ENCODE measurements at regions of chr2 and their contacts with region 1.

Region 1: DNA sequence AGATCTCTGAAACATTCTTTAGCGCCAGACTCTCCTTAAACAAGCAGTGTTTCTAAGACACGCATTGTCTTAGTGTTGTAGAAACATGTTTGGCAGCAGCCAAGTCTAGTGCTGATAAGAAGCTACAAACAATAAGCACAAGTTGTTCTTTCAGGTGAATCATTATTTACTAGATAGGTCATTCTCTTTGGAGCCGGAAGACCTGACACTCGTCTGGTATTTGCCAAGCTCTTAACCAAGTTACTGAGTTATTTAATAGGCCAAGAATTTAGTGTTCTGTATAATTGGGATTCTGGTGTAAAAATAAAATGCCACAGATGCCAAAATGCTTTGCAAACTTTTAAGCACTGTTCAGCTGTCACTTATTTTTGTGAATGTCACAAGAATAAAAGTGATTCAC is 852.1 kb downstream of the CPS1 start:
- DNase-seq: no peak
- H3K4me3 ChIP-seq: no peak overlapping the region
- H3K27ac ChIP-seq: no peak overlapping the region
- H3K4me1 ChIP-seq: no peaks in the 10 kb centered on the region
- H3K27me3 ChIP-seq: no peaks in the 10 kb centered on the region
- CTCF ChIP-seq: no peak

Region 2: GRCh38 chr2:210617732-210618330 is 790.7 kb before region 1 on chr2:
- CTCF ChIA-PET with region 1: no interaction called
- POLR2A ChIA-PET with region 1: no interaction called
- intact Hi-C with region 1: loop called (anchors 10 kb)
- DNase-seq: peak; percentile 66
- H3K4me3 ChIP-seq: no peak overlapping the region
- H3K27ac ChIP-seq: no peak overlapping the region
- H3K4me1 ChIP-seq: peaks cover 5% of the 10 kb centered on the region
- H3K27me3 ChIP-seq: no peaks in the 10 kb centered on the region
- CTCF ChIP-seq: peak; percentile 80

Region 3: GRCh38 chr2:211157856-211158463 is 250.6 kb before region 1 on chr2:
- CTCF ChIA-PET with region 1: no interaction called
- POLR2A ChIA-PET with region 1: no interaction called
- intact Hi-C with region 1: no loop called
- DNase-seq: peak; percentile 79
- H3K4me3 ChIP-seq: no peak overlapping the region
- H3K27ac ChIP-seq: no peak overlapping the region
- H3K4me1 ChIP-seq: no peaks in the 10 kb centered on the region
- H3K27me3 ChIP-seq: no peaks in the 10 kb centered on the region
- CTCF ChIP-seq: peak; percentile 95

Region 4: DNA sequence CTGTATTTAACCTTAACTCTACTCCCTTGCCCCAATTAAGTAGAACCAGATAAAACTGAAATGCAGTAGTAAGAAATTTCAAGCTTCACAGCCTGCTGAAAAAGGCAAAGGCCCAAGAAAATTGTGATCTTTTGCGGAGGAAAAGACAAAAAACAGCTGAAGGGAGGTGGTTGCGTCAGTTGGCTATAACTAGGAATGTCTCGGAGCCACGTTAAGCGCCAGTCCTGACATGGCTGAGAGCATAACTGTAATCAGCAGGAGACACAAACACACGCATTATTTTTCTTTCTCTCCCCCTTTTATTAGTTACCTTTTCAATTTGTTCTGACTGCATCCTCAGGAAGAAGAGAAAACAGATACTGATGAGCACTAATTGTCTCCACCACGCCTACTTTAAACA is 517.4 kb after region 1 on chr2:
- CTCF ChIA-PET with region 1: no interaction called
- POLR2A ChIA-PET with region 1: no interaction called
- intact Hi-C with region 1: no loop called
- DNase-seq: no peak
- H3K4me3 ChIP-seq: no peak overlapping the region
- H3K27ac ChIP-seq: no peak overlapping the region
- H3K4me1 ChIP-seq: peaks cover 19% of the 10 kb centered on the region
- H3K27me3 ChIP-seq: no peaks in the 10 kb centered on the region
- CTCF ChIP-seq: no peak